Sigmoid colon (tissue), 7 donors: ENCODE measurements at regions of chr1 and their contacts with region 1.

Region 1: DNA sequence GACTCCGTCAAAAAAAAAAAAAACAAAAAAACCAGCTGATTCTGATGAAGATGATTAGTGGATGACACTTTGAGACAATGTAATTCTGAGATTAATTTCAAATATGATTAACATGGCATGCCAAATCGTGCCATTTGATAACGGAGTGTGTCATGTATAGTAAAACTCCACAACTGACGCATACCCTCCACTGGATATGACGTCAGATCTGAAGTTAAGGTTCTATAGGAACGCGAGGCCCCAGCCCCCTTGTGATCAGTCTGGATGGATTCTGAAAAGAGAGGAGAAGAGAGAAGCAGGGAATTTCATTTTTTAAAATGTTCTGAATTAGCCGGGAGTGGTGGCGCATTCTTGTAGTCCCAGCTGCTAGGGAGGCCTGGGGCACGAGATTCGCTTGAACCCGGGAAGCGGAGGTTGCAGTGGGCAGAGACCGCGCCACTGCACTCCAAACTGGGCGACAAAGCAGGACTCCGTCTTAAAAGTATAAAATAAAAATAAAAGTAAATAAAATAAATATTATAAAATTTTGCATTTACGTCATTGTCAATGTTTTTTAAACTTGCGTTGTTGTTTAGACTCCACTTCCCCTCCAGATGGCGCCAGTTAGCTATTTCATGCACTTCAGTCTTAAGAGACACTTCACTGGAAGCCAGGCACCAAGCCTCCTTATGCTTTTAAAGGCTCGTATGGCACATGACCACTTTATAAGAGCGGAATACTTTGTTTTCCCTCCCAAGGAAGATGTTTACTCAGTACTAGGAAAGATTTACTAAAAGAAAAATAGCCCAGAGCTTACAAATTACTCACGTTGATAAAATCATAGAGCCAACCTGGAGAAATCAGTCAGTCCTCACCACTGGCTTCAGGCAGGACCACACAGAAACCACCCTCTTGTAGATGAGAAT is 65.5 kb downstream of the UBE2U start:
- DNase-seq: peak; percentile 83
- H3K4me3 ChIP-seq: no peak overlapping the region
- H3K27ac ChIP-seq: no peak overlapping the region
- H3K4me1 ChIP-seq: peaks cover 0 to 19% (median 6%) of the 10 kb centered on the region in 4 donors
- H3K27me3 ChIP-seq: no peaks in the 10 kb centered on the region
- CTCF ChIP-seq: peak; percentile 47 to 74 (median 66)
- EP300 ChIP-seq: no peak
- POLR2A ChIP-seq: no peak

Region 2: DNA sequence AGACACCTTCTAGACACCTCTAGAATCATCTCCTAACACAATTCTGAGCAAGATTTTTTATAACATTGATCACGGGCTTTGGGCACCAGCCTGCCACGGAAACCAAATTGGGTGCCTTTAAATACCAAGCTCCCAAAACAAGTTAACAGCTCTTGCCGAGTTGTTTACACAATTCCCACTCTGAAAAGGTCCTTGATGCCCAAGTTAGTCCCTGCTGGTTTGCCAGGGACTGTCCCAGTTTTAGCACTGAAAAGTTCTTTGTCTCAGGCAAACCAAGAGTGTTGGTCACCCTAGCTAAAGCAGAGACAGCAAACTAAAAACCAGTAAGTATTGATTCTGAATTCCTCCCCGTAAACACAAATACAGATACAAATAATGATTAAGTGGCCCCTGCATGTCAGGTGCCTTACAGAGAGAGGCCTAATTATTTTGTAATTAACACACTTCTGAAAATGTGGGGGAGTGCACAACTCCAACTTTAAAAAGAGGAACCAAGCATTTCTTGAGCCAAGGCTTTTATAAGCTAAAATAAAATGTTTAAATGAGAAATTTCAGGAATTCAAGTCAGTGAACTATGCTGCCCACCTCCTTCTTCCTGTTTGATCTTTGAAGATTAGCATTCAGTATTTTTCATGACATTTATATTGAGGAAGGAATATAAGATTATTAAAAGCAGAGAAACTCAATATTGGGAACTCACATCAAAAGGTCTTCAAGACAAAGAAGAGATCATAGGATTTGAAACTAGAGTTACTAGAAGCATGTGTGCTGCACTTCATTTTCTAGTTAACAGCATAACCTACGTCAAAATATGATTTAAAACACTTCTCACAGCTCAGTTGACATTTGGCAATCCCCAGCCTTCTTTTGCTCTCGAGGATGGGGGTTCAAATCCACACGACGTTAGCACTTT is 74.5 kb before region 1 on chr1:
- intact Hi-C with region 1: no loop called
- DNase-seq: no peak
- H3K4me3 ChIP-seq: no peak overlapping the region
- H3K27ac ChIP-seq: peak overlapping the region in 1 of 4 donors; percentile 13
- H3K4me1 ChIP-seq: peaks cover 0 to 28% (median 6%) of the 10 kb centered on the region in 4 donors
- H3K27me3 ChIP-seq: no peaks in the 10 kb centered on the region
- CTCF ChIP-seq: no peak
- EP300 ChIP-seq: no peak
- POLR2A ChIP-seq: no peak

Region 3: DNA sequence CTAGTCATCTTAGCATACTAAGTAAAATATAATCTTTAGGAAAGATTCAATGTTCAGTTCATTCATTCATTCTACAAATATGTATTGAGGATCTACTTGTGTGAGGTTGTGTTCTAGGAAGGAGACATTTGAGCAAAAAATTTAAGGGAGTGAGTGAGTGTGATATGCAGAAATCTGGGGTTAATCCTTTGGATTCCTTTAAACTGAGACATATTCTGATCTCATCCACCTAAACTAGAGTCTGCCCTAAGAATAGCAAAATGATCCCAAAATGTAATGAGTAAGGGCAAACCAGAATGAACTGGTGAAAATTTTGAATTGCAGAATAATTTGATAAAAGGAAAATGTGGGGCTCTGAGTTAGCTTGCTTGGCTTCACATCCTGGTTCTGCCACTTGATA is 56.9 kb before region 1 on chr1:
- intact Hi-C with region 1: no loop called
- DNase-seq: no peak
- H3K4me3 ChIP-seq: no peak overlapping the region
- H3K27ac ChIP-seq: no peak overlapping the region
- H3K4me1 ChIP-seq: no peaks in the 10 kb centered on the region
- H3K27me3 ChIP-seq: no peaks in the 10 kb centered on the region
- CTCF ChIP-seq: no peak
- EP300 ChIP-seq: no peak
- POLR2A ChIP-seq: no peak

Region 4: DNA sequence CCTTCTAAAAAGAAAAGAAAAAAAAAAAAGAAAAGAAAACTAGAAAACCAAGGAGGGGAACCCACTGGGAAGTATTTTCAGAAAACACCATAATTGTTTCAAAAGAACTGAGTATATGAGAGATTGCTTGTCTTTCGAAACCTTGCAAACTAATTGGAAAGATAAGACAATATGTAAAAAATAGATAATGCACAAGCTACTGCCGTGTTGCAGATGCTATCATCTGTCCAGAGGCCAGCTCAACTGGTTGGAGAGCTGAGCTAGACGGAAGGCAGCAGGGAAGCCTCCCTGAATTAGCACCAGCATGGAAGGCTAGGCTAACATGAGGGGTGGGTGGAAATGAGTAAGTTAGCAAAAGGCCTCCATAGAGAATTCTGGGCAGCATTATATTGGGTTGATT is 184.8 kb after region 1 on chr1:
- intact Hi-C with region 1: no loop called
- DNase-seq: no peak
- H3K4me3 ChIP-seq: no peak overlapping the region
- H3K27ac ChIP-seq: no peak overlapping the region
- H3K4me1 ChIP-seq: no peaks in the 10 kb centered on the region
- H3K27me3 ChIP-seq: no peaks in the 10 kb centered on the region
- CTCF ChIP-seq: no peak
- EP300 ChIP-seq: no peak
- POLR2A ChIP-seq: no peak

Region 5: DNA sequence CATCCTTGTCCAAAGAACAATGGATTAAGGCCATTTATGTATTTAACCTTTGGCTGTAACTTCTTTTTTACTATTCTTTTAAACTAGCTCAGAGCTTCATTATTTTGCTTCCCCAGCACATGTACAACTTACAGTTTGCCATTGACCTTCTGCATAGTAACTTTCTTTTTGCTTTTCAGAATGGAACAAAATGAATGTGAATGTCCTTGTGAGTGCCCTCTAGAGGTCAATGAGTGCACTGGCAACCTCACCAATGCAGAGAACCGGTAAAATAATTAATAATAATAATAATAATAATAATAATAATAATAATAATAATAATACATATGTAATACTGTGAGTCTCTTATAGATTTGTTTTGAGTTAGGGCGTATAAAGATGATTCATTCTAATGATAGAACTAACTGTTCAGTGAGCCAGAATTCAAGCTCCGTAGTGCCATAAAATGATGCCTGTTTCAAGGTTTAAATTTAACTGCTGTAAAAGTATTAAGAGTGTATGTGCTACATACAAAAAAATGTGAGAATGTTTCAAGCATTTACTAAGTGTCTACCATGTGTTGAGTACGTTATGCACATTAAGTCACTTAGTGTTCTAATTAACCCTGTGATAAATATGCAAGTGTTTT is 406.9 kb after region 1 on chr1:
- intact Hi-C with region 1: loop called (anchors 5 kb)
- DNase-seq: no peak
- H3K4me3 ChIP-seq: no peak overlapping the region
- H3K27ac ChIP-seq: no peak overlapping the region
- H3K4me1 ChIP-seq: peaks cover 0 to 16% (median 11%) of the 10 kb centered on the region in 4 donors
- H3K27me3 ChIP-seq: no peaks in the 10 kb centered on the region
- CTCF ChIP-seq: peak in 1 of 4 experiments; percentile 62
- EP300 ChIP-seq: no peak
- POLR2A ChIP-seq: no peak